ENCODE measurements at regions of chr2 and their contacts with region 1.

Region 1: GRCh38 chr2:221969087-221969829 is 329.5 kb downstream of the PAX3 start:
- DNase-seq: peak; percentile 54 to 61
- H3K4me3 ChIP-seq: no peak overlapping the region
- H3K27ac ChIP-seq: no peak overlapping the region
- H3K4me1 ChIP-seq: peaks cover 34% of the 10 kb centered on the region
- H3K27me3 ChIP-seq: no peaks in the 10 kb centered on the region
- CTCF ChIP-seq: peak; percentile 99

Region 2: DNA sequence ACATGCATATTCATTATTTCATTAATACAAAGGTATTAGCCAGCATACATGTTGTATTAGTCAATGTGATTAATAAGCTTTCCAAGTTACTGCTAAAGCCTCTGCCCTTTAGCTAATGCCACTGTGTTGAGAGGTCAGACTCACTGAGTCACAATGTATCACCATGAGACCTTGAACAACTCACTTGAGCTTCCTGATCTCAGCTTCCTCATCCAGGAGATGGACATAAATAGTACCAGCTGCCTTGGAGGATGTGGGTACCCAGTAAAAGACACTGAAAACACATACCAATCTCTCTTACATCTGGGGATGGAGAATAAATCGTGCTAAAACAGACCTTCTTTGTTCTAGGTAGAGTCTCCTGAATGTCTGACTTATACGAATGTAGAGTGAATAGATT is 621.8 kb before region 1 on chr2:
- CTCF ChIA-PET with region 1: no interaction called
- POLR2A ChIA-PET with region 1: no interaction called
- intact Hi-C with region 1: loop called (anchors 10 kb)
- DNase-seq: peak in 1 of 2 experiments; percentile 67
- H3K4me3 ChIP-seq: no peak overlapping the region
- H3K27ac ChIP-seq: no peak overlapping the region
- H3K4me1 ChIP-seq: peaks cover 7% of the 10 kb centered on the region; the same call in 1 of the 2 replicates
- H3K27me3 ChIP-seq: no peaks in the 10 kb centered on the region
- CTCF ChIP-seq: no peak

Region 3: GRCh38 chr2:221444106-221444505 is 525.2 kb before region 1 on chr2:
- CTCF ChIA-PET with region 1: no interaction called
- POLR2A ChIA-PET with region 1: no interaction called
- intact Hi-C with region 1: loop called (anchors 5 kb)
- DNase-seq: peak; percentile 65 to 97
- H3K4me3 ChIP-seq: peak overlapping the region; percentile 8; the same call in 1 of the 2 replicates
- H3K27ac ChIP-seq: peak overlapping the region; percentile 58
- H3K4me1 ChIP-seq: peaks cover 58% of the 10 kb centered on the region
- H3K27me3 ChIP-seq: no peaks in the 10 kb centered on the region
- CTCF ChIP-seq: no peak

Region 4: DNA sequence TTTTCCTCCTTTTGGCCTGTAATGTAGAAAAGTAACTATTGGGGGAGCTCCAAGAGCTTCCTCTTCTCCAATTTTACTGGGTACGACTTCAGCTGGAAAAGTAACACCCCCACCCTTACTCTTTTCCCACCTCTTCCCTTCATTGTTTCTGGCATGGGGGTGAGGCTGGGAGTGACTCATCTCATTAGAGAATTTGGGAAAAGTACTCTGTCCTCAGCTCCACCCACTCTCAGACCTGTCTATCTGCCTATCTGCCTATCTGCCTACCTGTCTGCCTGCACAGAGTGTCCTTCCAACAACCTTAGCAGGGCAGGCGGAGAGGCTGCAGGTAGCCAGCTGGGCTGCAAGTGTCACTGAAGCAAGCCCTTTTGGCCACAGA is 490.8 kb before region 1 on chr2:
- CTCF ChIA-PET with region 1: no interaction called
- POLR2A ChIA-PET with region 1: no interaction called
- intact Hi-C with region 1: loop called (anchors 2 kb)
- DNase-seq: peak; percentile 48 to 55
- H3K4me3 ChIP-seq: no peak overlapping the region
- H3K27ac ChIP-seq: no peak overlapping the region
- H3K4me1 ChIP-seq: peaks cover 17% of the 10 kb centered on the region
- H3K27me3 ChIP-seq: no peaks in the 10 kb centered on the region
- CTCF ChIP-seq: peak; percentile 40; the same call in 1 of the 2 replicates

Region 5: DNA sequence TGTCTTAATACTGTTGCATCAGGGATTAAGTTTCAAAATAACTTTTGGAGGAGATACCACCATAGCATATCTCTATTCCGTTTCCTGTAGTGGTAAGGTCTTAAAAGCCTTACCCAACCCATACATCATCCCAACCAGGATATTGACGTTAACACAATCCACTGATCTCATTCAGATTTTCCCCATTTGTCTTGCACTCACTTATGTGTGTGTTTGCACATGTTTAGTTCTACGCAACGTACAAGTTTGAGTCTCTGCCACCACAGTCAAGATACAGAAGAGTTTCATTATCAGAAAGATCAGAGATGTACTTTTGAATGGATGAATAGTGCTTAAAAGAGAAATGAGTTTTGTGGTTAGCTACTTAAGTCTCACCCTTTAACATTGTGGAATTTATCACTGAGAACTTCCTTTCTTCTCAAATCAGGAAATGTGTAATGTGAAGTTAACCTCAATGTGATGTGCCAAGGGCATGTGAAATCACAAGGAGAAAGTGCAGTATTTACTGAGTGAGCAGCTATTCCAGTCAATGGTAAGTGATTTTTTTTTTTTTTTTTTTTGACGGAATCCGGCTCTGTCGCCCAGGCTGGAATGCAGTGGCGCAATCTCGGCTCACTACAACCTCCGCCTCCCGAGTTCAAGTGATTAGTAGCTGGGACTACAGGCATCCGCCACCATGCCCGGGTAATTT is 327.9 kb before region 1 on chr2:
- CTCF ChIA-PET with region 1: no interaction called
- POLR2A ChIA-PET with region 1: no interaction called
- intact Hi-C with region 1: loop called (anchors 2 kb)
- DNase-seq: peak; percentile 78 to 85
- H3K4me3 ChIP-seq: no peak overlapping the region
- H3K27ac ChIP-seq: no peak overlapping the region
- H3K4me1 ChIP-seq: no peaks in the 10 kb centered on the region
- H3K27me3 ChIP-seq: no peaks in the 10 kb centered on the region
- CTCF ChIP-seq: no peak

Region 6: GRCh38 chr2:221836095-221836494 is 133.2 kb before region 1 on chr2:
- CTCF ChIA-PET with region 1: no interaction called
- POLR2A ChIA-PET with region 1: no interaction called
- intact Hi-C with region 1: loop called (anchors 5 kb)
- DNase-seq: peak in 1 of 2 experiments; percentile 52
- H3K4me3 ChIP-seq: no peak overlapping the region
- H3K27ac ChIP-seq: no peak overlapping the region
- H3K4me1 ChIP-seq: 0 out of 2 replicates have a peak, but pooled peaks cover 3% of the 10 kb centered on the region
- H3K27me3 ChIP-seq: no peaks in the 10 kb centered on the region
- CTCF ChIP-seq: peak; percentile 39; the same call in 1 of the 2 replicates

Region 7: DNA sequence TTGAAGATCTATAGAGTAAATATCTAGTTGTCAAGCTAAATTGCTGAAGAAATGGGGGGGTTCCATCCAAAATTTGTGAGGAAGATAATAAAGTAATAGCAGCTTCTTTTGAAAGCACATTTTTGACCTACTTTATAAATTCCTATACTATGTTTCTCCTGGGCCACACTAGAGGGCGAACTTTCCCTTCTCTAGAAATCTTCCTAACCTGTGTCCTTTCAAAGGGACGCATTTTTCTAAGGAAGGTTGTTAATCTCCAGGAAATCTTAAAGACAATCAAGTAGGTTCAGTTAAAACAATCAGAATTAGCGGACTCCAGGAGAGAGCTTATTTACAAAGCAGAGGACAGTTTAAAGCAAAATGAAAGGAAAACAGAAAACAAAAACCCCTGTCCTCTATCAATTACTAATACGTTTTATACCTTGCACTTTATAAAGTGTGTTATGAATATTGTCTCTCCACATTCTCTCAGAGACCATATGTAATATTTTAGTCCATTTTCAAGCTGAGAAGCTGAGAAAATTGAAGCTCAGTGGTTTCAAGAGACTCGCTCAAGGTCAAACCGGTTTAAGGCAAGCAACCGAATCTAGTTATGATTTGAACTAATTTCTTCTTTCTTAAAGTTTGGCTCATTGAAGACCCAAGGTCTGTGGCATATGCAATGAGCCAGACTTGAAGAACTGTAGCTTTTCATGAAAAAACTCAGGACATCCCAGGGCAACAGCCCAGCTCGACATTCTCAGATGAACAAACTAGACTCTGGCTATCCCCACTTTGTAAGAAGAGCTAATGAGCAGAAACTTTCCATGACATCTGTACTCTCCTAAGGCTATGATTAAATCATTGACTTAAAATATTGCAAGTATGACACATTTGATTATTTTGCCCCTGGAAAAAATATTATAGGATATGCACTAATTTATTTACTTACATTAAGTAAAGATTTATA is 55.9 kb after region 1 on chr2:
- CTCF ChIA-PET with region 1: no interaction called
- POLR2A ChIA-PET with region 1: no interaction called
- intact Hi-C with region 1: loop called (anchors 2 kb)
- DNase-seq: peak; percentile 15 to 62
- H3K4me3 ChIP-seq: no peak overlapping the region
- H3K27ac ChIP-seq: no peak overlapping the region
- H3K4me1 ChIP-seq: no peaks in the 10 kb centered on the region
- H3K27me3 ChIP-seq: no peaks in the 10 kb centered on the region
- CTCF ChIP-seq: peak; percentile 96

Measured in PC-9 (cell line).